Heart right ventricle (tissue), 16 donors: ENCODE measurements at regions of chr4 and their contacts with region 1.

Region 1: GRCh38 chr4:67674096-67674495 is 26.9 kb downstream of the UBA6 start:
- DNase-seq: no peak
- ATAC-seq: no peak
- H3K4me3 ChIP-seq: no peak overlapping the region
- H3K27ac ChIP-seq: no peak overlapping the region
- H3K4me1 ChIP-seq: no peaks in the 10 kb centered on the region
- H3K27me3 ChIP-seq: no peaks in the 10 kb centered on the region
- CTCF ChIP-seq: no peak

Region 2: DNA sequence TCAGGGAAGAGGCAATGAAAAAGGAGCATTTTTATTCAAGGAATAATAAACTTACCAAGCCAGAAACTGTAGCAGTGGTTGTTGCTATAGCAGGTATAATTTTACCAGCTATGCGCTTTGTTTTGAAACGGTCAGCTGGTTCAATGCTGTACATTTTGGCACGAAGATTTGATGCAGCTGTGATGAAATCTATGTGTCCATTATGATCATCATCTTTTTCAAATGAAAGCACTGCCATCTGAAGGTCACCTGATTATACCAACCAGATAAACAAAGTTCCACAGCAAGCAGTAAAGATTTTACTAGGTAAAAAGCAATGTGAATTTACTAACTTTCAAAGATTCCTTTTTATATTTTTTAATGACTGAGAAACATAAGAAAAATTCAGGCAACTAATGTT is 49.2 kb before region 1 on chr4:
- intact Hi-C with region 1: loop called in 1 of 10 experiments (anchors 10 kb)
- DNase-seq: no peak
- ATAC-seq: no peak
- H3K4me3 ChIP-seq: no peak overlapping the region
- H3K27ac ChIP-seq: no peak overlapping the region
- H3K4me1 ChIP-seq: no peaks in the 10 kb centered on the region
- H3K27me3 ChIP-seq: no peaks in the 10 kb centered on the region
- CTCF ChIP-seq: no peak

Region 3: DNA sequence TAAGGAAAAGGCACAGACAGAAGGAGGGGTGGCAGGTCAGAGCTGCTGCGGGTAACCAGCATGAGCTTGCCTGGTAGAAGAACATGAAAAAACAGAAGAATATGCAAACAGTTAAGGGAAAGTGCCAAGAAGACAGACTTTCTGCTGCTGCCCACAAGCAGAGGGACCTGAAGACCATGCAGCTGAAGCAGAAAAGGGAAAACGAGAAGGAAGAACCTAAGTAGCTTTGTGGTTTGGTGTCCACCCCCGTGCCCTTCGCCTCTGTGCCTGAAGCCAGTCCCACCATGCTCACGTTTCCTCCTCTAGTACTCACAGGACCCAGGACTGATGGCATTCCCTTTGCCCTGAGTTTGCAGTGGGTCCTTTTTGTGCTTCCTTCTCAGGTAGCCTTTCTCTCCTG is 36.0 kb before region 1 on chr4:
- intact Hi-C with region 1: loop called in 1 of 10 experiments (anchors 5 kb)
- DNase-seq: no peak
- ATAC-seq: no peak
- H3K4me3 ChIP-seq: no peak overlapping the region
- H3K27ac ChIP-seq: no peak overlapping the region
- H3K4me1 ChIP-seq: no peaks in the 10 kb centered on the region
- H3K27me3 ChIP-seq: no peaks in the 10 kb centered on the region
- CTCF ChIP-seq: no peak